ENCODE measurements at regions of chr5 and their contacts with region 1.

Region 1: DNA sequence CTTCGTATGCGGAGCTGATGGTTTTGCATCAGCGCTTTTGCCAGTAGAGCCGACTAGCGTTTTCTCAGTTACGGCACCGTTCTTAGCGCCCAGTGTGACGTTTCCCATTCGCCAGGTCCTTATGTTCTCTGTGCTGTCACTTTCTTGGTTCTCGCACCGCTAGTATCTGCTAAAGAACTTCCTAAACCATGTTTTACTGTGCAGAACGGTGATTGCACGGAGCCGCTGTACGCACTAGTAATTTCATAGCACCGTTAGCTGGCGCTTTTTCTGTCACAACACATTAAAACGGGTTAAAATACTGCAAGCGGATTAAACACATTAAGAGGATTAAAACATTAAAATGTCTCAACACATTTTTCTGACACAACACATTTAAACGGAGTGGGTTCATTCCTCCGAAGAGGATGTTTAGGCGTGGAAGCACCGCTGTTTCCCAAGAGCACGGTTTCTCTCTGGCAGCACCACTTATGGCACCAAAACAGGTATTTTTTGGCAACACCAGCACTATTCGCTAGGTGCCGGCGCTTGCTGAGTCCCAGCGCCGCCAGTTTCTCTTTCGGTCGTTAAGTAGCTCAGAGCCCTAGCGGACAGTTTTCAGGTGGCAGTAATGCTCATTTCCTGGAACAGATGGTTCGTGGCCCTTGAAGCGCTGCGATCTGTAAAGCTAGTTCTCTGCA is 20.4 kb downstream of the ANXA2R start:
- DNase-seq: peak; percentile 94
- ATAC-seq: peak; percentile 73
- H3K4me3 Mint-ChIP-seq: peak overlapping the region; percentile 95
- H3K27ac Mint-ChIP-seq: peak overlapping the region; percentile 99
- H3K4me1 Mint-ChIP-seq: peaks cover 36% of the 10 kb centered on the region
- H3K27me3 Mint-ChIP-seq: no peaks in the 10 kb centered on the region

Region 2: GRCh38 chr5:42994246-42995151 is 25.3 kb before region 1 on chr5:
- CTCF ChIA-PET with region 1: interaction called, 150 read pairs
- POLR2A ChIA-PET with region 1: interaction called, 403 read pairs
- DNase-seq: peak; percentile 94
- ATAC-seq: peak; percentile 60
- H3K4me3 Mint-ChIP-seq: peak overlapping the region; percentile 94
- H3K27ac Mint-ChIP-seq: peak overlapping the region; percentile 99
- H3K4me1 Mint-ChIP-seq: peaks cover 19% of the 10 kb centered on the region
- H3K27me3 Mint-ChIP-seq: no peaks in the 10 kb centered on the region

Region 3: GRCh38 chr5:43008369-43009153 is 11.2 kb before region 1 on chr5:
- CTCF ChIA-PET with region 1: interaction called, 114 read pairs
- POLR2A ChIA-PET with region 1: interaction called, 260 read pairs
- DNase-seq: peak; percentile 94
- ATAC-seq: peak; percentile 71
- H3K4me3 Mint-ChIP-seq: peak overlapping the region; percentile 90
- H3K27ac Mint-ChIP-seq: peak overlapping the region; percentile 98
- H3K4me1 Mint-ChIP-seq: peaks cover 44% of the 10 kb centered on the region
- H3K27me3 Mint-ChIP-seq: peaks cover 1% of the 10 kb centered on the region

Region 4: DNA sequence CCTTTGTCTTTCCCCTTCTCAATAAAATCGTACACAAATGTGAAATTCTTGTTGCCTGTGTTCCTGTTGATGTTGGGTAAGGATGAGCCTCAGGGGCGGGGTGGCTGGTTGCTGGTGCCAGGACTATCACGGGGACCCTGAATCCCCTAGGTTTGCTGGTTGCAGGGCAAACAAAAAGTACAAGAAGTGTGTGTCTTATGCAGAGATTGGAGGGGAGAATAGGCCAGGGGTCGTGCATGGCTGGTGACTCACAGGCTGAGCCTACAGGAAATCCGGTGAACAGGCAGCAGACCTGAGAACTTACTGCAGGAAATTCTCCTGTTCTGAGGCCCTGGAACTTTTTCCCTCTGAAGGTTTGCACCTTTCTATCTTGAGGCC is 14.8 kb after region 1 on chr5:
- CTCF ChIA-PET with region 1: interaction called, 108 read pairs
- POLR2A ChIA-PET with region 1: interaction called, 532 read pairs
- DNase-seq: peak; percentile 35
- ATAC-seq: no peak
- H3K4me3 Mint-ChIP-seq: peak overlapping the region; percentile 35
- H3K27ac Mint-ChIP-seq: peak overlapping the region; percentile 68
- H3K4me1 Mint-ChIP-seq: peaks cover 53% of the 10 kb centered on the region
- H3K27me3 Mint-ChIP-seq: no peaks in the 10 kb centered on the region

Region 5: DNA sequence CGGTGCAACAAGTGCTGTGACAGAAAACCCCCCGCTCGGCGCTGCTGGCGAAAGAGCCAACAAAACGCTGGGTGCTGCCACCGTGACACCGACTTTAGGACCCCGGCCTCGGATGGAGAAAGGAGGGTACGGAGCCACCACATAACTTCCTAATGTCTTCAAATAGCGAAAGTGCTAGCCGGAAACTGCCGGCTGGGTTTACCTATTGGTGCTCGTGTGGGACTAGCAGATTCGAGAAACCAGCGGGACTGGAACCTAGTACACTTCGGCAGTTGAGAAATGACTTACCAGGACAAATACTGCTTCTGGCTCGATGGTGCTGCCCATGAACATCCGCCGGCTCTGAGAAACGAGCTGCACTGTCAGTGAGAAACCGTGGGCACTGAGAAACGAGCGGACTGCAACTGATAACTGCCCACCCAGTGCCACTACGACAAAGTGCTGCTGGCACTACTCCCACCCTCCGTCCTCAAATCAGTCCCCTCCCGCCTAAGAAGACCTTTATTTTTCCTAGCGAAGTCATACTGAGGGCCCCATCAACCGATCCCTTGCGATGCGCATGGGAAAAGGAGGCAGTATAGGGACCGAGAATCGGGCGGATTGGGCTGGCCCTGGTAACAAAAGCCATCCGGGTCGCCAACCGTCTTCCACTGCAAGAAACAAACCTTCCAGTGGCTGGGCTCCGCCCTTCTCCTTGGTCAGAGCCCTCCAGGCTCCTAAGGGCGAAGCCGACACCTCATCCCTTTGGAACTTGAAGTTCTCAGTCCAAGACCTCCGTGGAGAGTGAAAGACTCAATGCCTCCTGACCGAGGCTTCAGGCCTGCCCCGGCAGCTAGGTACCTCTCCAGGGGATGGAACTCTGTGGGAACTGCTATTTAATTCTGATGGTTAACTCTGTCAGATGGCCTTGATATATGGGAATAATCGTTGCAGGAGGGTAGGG is 47.3 kb after region 1 on chr5:
- CTCF ChIA-PET with region 1: interaction called, 20 read pairs
- POLR2A ChIA-PET with region 1: interaction called, 129 read pairs
- DNase-seq: peak; percentile 91
- ATAC-seq: peak; percentile 59
- H3K4me3 Mint-ChIP-seq: peak overlapping the region; percentile 94
- H3K27ac Mint-ChIP-seq: peak overlapping the region; percentile 99
- H3K4me1 Mint-ChIP-seq: peaks cover 43% of the 10 kb centered on the region
- H3K27me3 Mint-ChIP-seq: no peaks in the 10 kb centered on the region

Measured in activated CD8-positive, alpha-beta T cell treated with anti-CD3 and anti-CD28 coated beads, Interleukin-2, amount 10 ng/mL, durations not matched to agents 7 days and 5 days (primary cell).